GM12878 (cell line): ENCODE measurements at regions of chr15 and their contacts with region 1.

Region 1: GRCh38 chr15:65400760-65401610 is 21.8 kb downstream of the IGDCC4 start:
- DNase-seq: no peak
- ATAC-seq: peak; percentile 96
- H3K4me3 ChIP-seq: no peak overlapping the region
- H3K27ac ChIP-seq: no peak overlapping the region
- H3K4me1 ChIP-seq: no peaks in the 10 kb centered on the region
- H3K27me3 ChIP-seq: peaks cover 0 to 4% of the 10 kb centered on the region in 2 experiments; a peak in 3 of 4 replicates
- CTCF ChIP-seq: peak; percentile 81 to 88 (median 82)
- EP300 ChIP-seq: no peak
- POLR2A ChIP-seq: no peak
- RAD21 ChIP-seq: peak; percentile 86

Region 2: GRCh38 chr15:65249641-65250040 is 151.3 kb before region 1 on chr15:
- CTCF ChIA-PET with region 1: no interaction called
- POLR2A ChIA-PET with region 1: no interaction called
- RAD21 ChIA-PET with region 1: no interaction called
- SMC1A ChIA-PET with region 1: no interaction called
- in situ Hi-C with region 1: no loop called
- intact Hi-C with region 1: no loop called
- DNase-seq: peak; percentile 38
- ATAC-seq: peak; percentile 95
- H3K4me3 ChIP-seq: no peak overlapping the region
- H3K27ac ChIP-seq: peak overlapping the region; percentile 33; the same call in 1 of the 2 replicates
- H3K4me1 ChIP-seq: peaks cover 11% of the 10 kb centered on the region
- H3K27me3 ChIP-seq: no peaks in the 10 kb centered on the region
- CTCF ChIP-seq: no peak
- EP300 ChIP-seq: no peak
- POLR2A ChIP-seq: 0 out of 2 replicates have a peak, but pooled peaks have one; percentile 21
- RAD21 ChIP-seq: no peak

Region 3: GRCh38 chr15:65364838-65365628 is 36.0 kb before region 1 on chr15:
- CTCF ChIA-PET with region 1: no interaction called
- POLR2A ChIA-PET with region 1: no interaction called
- RAD21 ChIA-PET with region 1: no interaction called
- SMC1A ChIA-PET with region 1: no interaction called
- in situ Hi-C with region 1: no loop called
- intact Hi-C with region 1: no loop called
- DNase-seq: no peak
- ATAC-seq: no peak
- H3K4me3 ChIP-seq: no peak overlapping the region
- H3K27ac ChIP-seq: no peak overlapping the region
- H3K4me1 ChIP-seq: no peaks in the 10 kb centered on the region
- H3K27me3 ChIP-seq: peaks cover 0 to 1% of the 10 kb centered on the region in 2 experiments; a peak in 2 of 4 replicates
- CTCF ChIP-seq: no peak
- EP300 ChIP-seq: no peak
- POLR2A ChIP-seq: no peak
- RAD21 ChIP-seq: no peak

Region 4: GRCh38 chr15:65384895-65385858 is 15.8 kb before region 1 on chr15:
- CTCF ChIA-PET with region 1: interaction called, 21 read pairs
- POLR2A ChIA-PET with region 1: no interaction called
- RAD21 ChIA-PET with region 1: interaction called, 7 read pairs
- SMC1A ChIA-PET with region 1: interaction called, 3 read pairs
- in situ Hi-C with region 1: no loop called
- intact Hi-C with region 1: no loop called
- DNase-seq: no peak
- ATAC-seq: peak; percentile 96
- H3K4me3 ChIP-seq: no peak overlapping the region
- H3K27ac ChIP-seq: no peak overlapping the region
- H3K4me1 ChIP-seq: peaks cover 7% of the 10 kb centered on the region
- H3K27me3 ChIP-seq: peaks cover 1 to 3% of the 10 kb centered on the region in 2 experiments; a peak in 3 of 4 replicates
- CTCF ChIP-seq: peak; percentile 87 to 95 (median 89)
- EP300 ChIP-seq: no peak
- POLR2A ChIP-seq: no peak
- RAD21 ChIP-seq: peak; percentile 86

Region 5: GRCh38 chr15:65434201-65434600 is 33.2 kb after region 1 on chr15:
- CTCF ChIA-PET with region 1: interaction called, 68 read pairs
- POLR2A ChIA-PET with region 1: no interaction called
- RAD21 ChIA-PET with region 1: interaction called, 19 read pairs
- SMC1A ChIA-PET with region 1: interaction called, 6 read pairs
- in situ Hi-C with region 1: no loop called
- intact Hi-C with region 1: no loop called
- DNase-seq: no peak
- ATAC-seq: no peak
- H3K4me3 ChIP-seq: no peak overlapping the region
- H3K27ac ChIP-seq: no peak overlapping the region
- H3K4me1 ChIP-seq: no peaks in the 10 kb centered on the region
- H3K27me3 ChIP-seq: no peaks in the 10 kb centered on the region; a peak in 1 of 4 replicates
- CTCF ChIP-seq: no peak
- EP300 ChIP-seq: no peak
- POLR2A ChIP-seq: no peak
- RAD21 ChIP-seq: no peak

Region 6: GRCh38 chr15:65460741-65461347 is 59.9 kb after region 1 on chr15:
- CTCF ChIA-PET with region 1: interaction called, 10 read pairs
- POLR2A ChIA-PET with region 1: no interaction called
- RAD21 ChIA-PET with region 1: interaction called, 4 read pairs
- SMC1A ChIA-PET with region 1: no interaction called
- in situ Hi-C with region 1: no loop called
- intact Hi-C with region 1: loop called (anchors 5 kb)
- DNase-seq: no peak
- ATAC-seq: peak; percentile 63
- H3K4me3 ChIP-seq: no peak overlapping the region
- H3K27ac ChIP-seq: no peak overlapping the region
- H3K4me1 ChIP-seq: no peaks in the 10 kb centered on the region
- H3K27me3 ChIP-seq: no peaks in the 10 kb centered on the region
- CTCF ChIP-seq: no peak
- EP300 ChIP-seq: no peak
- POLR2A ChIP-seq: no peak
- RAD21 ChIP-seq: no peak

Region 7: GRCh38 chr15:65583701-65584100 is 182.7 kb after region 1 on chr15:
- CTCF ChIA-PET with region 1: interaction called, 7 read pairs
- POLR2A ChIA-PET with region 1: no interaction called
- RAD21 ChIA-PET with region 1: no interaction called
- SMC1A ChIA-PET with region 1: no interaction called
- in situ Hi-C with region 1: no loop called
- intact Hi-C with region 1: loop called (anchors 5 kb)
- DNase-seq: peak; percentile 28
- ATAC-seq: peak; percentile 94
- H3K4me3 ChIP-seq: no peak overlapping the region
- H3K27ac ChIP-seq: peak overlapping the region; percentile 50; the same call in 1 of the 2 replicates
- H3K4me1 ChIP-seq: peaks cover 4% of the 10 kb centered on the region; the same call in 1 of the 2 replicates
- H3K27me3 ChIP-seq: no peaks in the 10 kb centered on the region
- CTCF ChIP-seq: no peak
- EP300 ChIP-seq: no peak
- POLR2A ChIP-seq: no peak
- RAD21 ChIP-seq: no peak